ENCODE measurements at regions of chr12 and their contacts with region 1.

Region 1: GRCh38 chr12:32365473-32366064 is 33.8 kb upstream of the FGD4 start:
- DNase-seq: no peak
- ATAC-seq: peak; percentile 37

Region 2: GRCh38 chr12:32659908-32660440 is 294.4 kb after region 1 on chr12:
- intact Hi-C with region 1: loop called (anchors 1 kb)
- DNase-seq: no peak
- ATAC-seq: no peak

Region 3: DNA sequence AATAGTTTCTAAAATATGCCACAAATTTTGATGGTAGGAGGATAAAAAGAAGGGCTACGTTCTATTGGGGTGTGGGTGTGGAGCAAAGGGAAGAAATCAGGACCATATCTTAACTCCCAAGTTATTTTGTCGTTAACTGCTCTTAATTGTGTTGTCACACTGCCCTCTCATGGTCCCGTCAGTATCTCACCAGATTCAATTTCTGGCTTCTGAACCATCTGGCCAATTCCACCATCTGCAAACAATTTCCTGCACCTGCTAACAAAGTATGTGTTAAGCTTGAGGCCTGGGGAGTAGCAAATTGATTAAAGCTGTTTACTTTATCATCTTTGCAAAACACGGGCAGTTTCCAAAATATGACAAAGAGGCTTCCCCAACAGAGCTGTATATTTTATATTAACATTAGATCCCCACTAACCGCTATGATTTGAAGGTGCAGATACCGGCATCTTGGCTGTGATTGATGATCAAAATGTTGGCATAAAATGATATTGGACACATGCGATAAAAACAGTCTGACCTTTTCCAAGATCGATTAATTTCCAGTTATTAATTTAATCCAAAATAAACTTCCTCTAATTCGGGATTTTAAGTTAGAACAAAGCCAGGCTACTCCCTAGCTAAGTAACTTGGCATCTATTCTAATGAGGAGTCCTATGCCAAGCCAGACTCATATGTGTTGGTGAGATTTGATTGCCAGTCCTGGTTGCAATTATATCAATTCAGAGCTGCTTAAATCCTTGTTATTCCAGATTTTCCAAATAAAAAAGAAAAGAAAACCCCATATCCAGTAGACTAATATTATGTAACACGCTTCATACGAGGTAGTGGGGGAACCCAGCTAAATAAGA is 306.6 kb after region 1 on chr12:
- intact Hi-C with region 1: loop called (anchors 1 kb)
- DNase-seq: no peak
- ATAC-seq: peak; percentile 87